Endothelial cell of umbilical vein (primary cell): ENCODE measurements at regions of chr4 and their contacts with region 1.

Region 1: DNA sequence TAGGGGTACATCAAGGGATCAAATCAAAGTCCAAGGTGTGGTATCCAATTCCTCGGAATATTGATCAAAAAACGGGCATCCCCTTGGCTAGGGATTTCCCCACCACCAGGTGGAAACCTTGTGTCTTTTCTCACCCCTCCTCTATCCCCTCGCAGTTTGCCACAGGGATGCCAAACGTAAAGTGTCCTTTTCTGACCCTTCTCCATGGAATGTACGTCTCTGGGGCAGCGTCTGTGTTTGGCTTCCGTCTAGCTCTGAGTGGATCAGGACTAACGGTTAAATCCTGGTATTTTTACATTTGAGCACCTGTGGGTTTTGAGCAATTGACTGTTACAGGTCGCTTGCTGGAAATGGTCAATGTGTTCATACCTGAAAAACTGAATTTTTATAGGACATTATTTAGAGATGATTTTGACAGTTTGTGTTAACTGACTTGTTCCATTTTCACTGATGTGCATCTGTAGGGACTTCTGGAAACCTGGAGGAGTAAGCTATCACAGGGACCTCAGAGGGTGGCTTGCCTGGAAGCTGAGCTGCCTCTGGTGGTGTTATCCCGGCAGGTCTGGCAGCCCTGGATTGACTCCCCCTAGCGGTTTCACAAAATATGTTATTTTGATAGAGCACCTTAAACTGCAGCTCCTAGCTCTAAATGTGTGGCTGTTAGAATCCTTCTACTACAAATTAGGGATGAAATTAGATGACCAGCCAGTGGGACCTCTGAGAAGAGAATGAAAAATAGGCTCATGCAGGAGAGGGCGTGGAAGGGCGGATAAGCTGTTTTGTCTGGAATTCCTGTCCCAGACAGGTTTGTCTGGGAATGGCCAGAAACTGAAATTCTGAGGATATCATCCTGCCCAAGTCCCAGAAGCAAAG is 8.8 kb upstream of the MGST2 start:
- DNase-seq: peak; percentile 76
- H3K4me3 ChIP-seq: peak overlapping the region in 1 of 3 experiments; percentile 30
- H3K27ac ChIP-seq: peak overlapping the region; percentile 94
- H3K4me1 ChIP-seq: peaks cover 45% of the 10 kb centered on the region
- H3K27me3 ChIP-seq: no peaks in the 10 kb centered on the region
- CTCF ChIP-seq: peak; percentile 83 to 86
- POLR2A ChIP-seq: no peak

Region 2: DNA sequence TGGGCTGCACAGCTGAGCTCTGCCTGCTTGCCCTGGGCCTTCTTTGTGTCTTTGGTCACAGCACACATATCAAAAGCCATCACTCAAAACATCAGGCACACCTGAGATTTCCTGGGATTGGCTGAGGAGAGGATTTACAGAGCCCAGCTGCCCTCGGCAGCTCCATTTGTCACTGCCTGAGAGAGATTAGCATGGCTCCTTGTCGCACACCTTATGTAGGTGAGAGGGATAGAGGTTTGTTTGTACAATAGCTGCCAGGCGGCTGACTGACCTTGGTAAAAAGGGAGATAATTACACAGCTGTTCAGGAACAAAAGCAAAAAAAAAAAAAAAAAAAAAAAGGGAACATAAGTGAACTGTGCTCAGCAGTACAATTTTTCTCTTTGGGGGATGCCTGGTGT is 72.0 kb after region 1 on chr4:
- CTCF ChIA-PET with region 1: interaction called, 16 read pairs
- POLR2A ChIA-PET with region 1: no interaction called
- dilution Hi-C with region 1: no loop called
- intact Hi-C with region 1: loop called (anchors 1 kb)
- DNase-seq: no peak
- H3K4me3 ChIP-seq: no peak overlapping the region
- H3K27ac ChIP-seq: no peak overlapping the region
- H3K4me1 ChIP-seq: peaks cover 9% of the 10 kb centered on the region
- H3K27me3 ChIP-seq: no peaks in the 10 kb centered on the region
- CTCF ChIP-seq: no peak
- POLR2A ChIP-seq: no peak

Region 3: GRCh38 chr4:139761461-139761860 is 104.6 kb after region 1 on chr4:
- CTCF ChIA-PET with region 1: no interaction called
- POLR2A ChIA-PET with region 1: no interaction called
- dilution Hi-C with region 1: no loop called
- intact Hi-C with region 1: loop called (anchors 5 kb)
- DNase-seq: no peak
- H3K4me3 ChIP-seq: no peak overlapping the region
- H3K27ac ChIP-seq: no peak overlapping the region
- H3K4me1 ChIP-seq: peaks cover 41% of the 10 kb centered on the region
- H3K27me3 ChIP-seq: no peaks in the 10 kb centered on the region
- CTCF ChIP-seq: peak; percentile 19 to 25
- POLR2A ChIP-seq: no peak

Region 4: DNA sequence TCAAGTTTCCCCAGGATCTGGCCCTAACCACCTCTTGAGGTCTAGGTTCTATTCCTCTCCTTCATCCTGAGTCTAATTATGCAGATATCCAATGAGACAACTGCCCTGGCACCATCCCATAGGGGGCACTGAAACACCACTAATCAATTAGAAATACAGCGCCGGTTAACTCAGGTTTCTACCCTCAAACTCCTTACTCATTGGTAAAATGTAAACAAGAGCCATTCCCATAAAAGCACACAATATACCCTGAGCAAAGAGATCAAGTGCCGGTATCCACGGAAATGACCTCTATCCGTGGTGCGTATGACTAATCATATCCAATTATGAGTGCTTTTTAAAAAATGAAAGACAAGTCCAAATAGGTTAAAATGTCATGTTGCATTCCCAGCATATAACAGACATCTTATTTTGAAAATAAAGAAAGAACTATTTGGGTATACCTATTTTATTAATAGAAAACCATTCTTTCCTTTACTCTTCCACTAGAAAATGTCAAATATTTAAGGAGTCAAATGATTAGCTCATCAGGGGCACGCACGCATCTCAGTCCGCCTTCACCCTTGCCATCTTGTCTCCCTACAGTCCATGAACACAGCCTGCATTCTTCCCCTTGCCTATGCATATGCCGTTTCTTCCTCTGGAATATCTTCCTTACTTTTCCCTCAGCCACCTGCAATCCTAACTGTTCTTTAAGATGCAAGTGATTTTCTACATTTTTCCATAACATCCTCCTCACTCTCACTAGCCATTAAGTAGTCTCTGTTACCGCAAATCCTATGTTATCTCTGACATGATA is 356.0 kb after region 1 on chr4:
- CTCF ChIA-PET with region 1: interaction called, 4 read pairs
- POLR2A ChIA-PET with region 1: no interaction called
- dilution Hi-C with region 1: no loop called
- intact Hi-C with region 1: loop called (anchors 1 kb)
- DNase-seq: peak; percentile 92
- H3K4me3 ChIP-seq: no peak overlapping the region
- H3K27ac ChIP-seq: peak overlapping the region; percentile 49
- H3K4me1 ChIP-seq: peaks cover 17% of the 10 kb centered on the region
- H3K27me3 ChIP-seq: no peaks in the 10 kb centered on the region
- CTCF ChIP-seq: peak; percentile 62 to 74
- POLR2A ChIP-seq: no peak

Region 5: DNA sequence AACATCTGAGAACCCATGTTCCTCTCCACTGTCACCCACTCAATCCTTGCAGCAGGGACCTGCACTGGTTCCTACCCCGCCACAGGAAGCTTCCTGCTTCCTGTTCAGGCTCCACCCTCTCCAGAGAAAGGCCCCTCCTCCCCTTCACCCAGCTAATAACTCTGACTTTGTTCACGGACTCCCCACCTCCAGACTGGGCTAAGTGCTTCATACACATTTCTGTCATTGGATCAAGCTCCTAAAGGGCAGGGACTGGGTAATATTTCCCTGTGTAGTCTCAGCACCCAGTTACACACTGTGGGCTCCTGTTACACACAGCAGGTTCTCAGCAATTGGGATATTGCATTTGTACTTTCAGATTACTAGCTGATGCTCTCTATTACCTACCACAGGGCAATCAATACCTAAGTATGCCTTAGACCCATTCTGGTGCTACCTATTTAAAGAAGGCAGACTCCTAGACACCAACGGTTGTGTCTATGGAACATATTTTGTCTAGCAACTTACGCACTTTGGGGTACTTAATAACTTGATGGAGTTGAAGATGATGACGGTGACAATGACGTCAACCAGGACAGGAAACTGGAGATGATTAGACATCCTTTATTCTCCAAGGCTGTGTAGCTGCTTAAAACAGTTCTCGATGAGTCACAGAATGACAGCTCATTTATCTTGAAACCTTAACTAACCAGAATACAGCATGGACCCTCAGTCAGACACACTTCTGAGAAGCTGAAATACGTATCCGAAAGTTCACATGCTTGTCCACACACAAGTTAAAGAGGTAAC is 439.0 kb after region 1 on chr4:
- CTCF ChIA-PET with region 1: no interaction called
- POLR2A ChIA-PET with region 1: no interaction called
- dilution Hi-C with region 1: no loop called
- intact Hi-C with region 1: loop called (anchors 5 kb)
- DNase-seq: peak; percentile 95
- H3K4me3 ChIP-seq: peak overlapping the region in 1 of 3 experiments; percentile 57
- H3K27ac ChIP-seq: peak overlapping the region; percentile 100
- H3K4me1 ChIP-seq: peaks cover 97% of the 10 kb centered on the region
- H3K27me3 ChIP-seq: no peaks in the 10 kb centered on the region
- CTCF ChIP-seq: no peak
- POLR2A ChIP-seq: peak; percentile 53